Ascending aorta (tissue), 2 donors: ENCODE measurements at regions of chr7 and their contacts with region 1.

Region 1: DNA sequence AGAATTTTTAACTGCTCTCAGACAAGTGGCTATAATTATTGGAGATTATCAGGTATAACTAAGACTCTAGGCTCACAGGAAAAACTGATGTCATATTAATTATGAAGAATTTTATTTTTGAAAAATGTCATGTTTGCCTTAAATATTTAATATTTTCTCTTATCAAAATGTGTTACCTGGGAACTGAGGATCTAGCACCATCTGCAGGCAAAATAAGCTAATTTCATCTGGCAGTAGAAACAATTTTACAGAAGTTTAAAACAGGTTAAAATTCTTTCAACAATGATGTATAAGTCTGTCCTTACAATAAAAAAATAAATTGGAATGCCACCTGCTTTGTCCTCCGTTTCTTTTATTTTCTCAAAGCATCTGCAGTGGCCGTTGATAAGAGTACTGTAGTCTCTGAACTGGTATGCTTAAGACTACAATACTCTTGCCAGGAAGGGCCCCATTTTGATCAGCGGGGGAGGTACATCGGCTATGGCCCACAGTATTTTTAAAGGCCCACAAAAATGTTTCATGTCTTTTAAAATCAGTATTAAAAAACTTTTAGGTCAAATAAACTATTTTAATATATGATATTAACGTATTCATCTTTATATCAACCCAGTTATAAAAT is 81.3 kb downstream of the VWDE start:
- DNase-seq: no peak
- H3K4me3 ChIP-seq: no peak overlapping the region
- H3K27ac ChIP-seq: no peak overlapping the region
- H3K4me1 ChIP-seq: no peaks in the 10 kb centered on the region
- H3K27me3 ChIP-seq: no peaks in the 10 kb centered on the region
- CTCF ChIP-seq: peak; percentile 27 to 49 (median 27)

Region 2: DNA sequence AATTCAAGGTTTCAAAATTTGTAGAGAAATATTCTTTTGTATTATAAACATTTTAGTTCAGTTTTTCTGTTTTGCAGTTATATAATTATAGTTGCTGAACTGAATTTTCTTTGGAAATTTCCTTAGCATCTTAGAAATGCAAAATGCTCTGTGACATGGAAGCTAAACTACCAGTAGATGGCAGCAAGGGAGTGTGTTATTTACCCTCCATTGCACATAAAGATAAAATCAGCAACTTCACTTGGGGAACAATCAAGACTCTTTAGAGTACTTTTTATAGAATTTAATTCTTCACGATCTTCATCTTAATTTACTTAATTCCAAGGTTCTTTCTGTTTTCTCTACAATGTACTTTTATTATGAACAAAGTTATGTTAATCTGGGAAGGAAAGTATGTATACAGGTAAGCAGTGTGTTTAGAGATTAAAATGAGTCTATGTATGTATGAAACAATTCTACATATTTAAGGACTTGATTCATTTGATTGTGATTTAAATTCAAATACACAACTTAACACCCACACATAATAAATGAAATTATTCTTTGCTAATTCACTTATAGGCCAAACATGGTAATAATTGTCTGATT is 894.6 kb before region 1 on chr7:
- intact Hi-C with region 1: loop called (anchors 5 kb)
- DNase-seq: no peak
- H3K4me3 ChIP-seq: no peak overlapping the region
- H3K27ac ChIP-seq: no peak overlapping the region
- H3K4me1 ChIP-seq: no peaks in the 10 kb centered on the region
- H3K27me3 ChIP-seq: no peaks in the 10 kb centered on the region
- CTCF ChIP-seq: peak; percentile 8 to 44 (median 24)

Region 3: DNA sequence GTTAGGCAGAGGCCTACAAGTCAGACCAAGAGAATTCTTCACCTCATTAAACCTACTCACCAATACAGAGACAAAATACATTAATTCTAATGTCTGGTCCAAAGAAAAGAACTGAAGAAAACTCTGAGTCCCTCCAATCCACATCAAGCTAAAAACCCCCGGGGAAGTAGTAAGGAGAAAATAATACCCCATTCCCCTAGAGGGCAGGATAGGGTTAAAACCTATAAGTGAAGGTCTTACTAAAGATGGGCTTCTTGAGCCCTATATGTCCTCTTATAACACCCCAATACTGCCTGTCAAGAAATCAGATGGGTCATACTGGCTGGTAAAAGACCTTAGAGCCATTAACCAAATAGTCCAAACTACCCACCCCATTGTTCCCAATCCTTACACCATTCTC is 252.6 kb before region 1 on chr7:
- intact Hi-C with region 1: no loop called
- DNase-seq: no peak
- H3K4me3 ChIP-seq: no peak overlapping the region
- H3K27ac ChIP-seq: no peak overlapping the region
- H3K4me1 ChIP-seq: no peaks in the 10 kb centered on the region
- H3K27me3 ChIP-seq: no peaks in the 10 kb centered on the region
- CTCF ChIP-seq: no peak